Activated T-helper 1 cell treated with anti-CD3 and anti-CD28 coated beads, Interleukin-12 subunit alpha, Interleukin-12 subunit beta, Interleukin-2, Interleukin-4 antibody, amounts not matched to agents 30 ng/mL and 10 ng/mL and 1 ng/mL, durations not matched to agents 14 hours and 24 hours and 36 hours (primary cell): ENCODE measurements at regions of chr3 and their contacts with region 1.

Region 1: GRCh38 chr3:152524198-152525140 is 255.7 kb downstream of the MBNL1 start:
- DNase-seq: no peak
- H3K4me3 Mint-ChIP-seq: no peak overlapping the region
- H3K27ac Mint-ChIP-seq: no peak overlapping the region
- H3K4me1 Mint-ChIP-seq: no peaks in the 10 kb centered on the region
- H3K27me3 Mint-ChIP-seq: peaks cover 15% of the 10 kb centered on the region

Region 2: GRCh38 chr3:151468284-151468917 is 1056.1 kb before region 1 on chr3:
- intact Hi-C with region 1: loop called (anchors 2 kb)
- DNase-seq: peak; percentile 6
- H3K4me3 Mint-ChIP-seq: no peak overlapping the region
- H3K27ac Mint-ChIP-seq: no peak overlapping the region
- H3K4me1 Mint-ChIP-seq: no peaks in the 10 kb centered on the region
- H3K27me3 Mint-ChIP-seq: peaks cover 9% of the 10 kb centered on the region

Region 3: GRCh38 chr3:152071924-152072323 is 452.5 kb before region 1 on chr3:
- intact Hi-C with region 1: loop called (anchors 1 kb)
- DNase-seq: no peak
- H3K4me3 Mint-ChIP-seq: no peak overlapping the region
- H3K27ac Mint-ChIP-seq: no peak overlapping the region
- H3K4me1 Mint-ChIP-seq: no peaks in the 10 kb centered on the region
- H3K27me3 Mint-ChIP-seq: peaks cover 2% of the 10 kb centered on the region

Region 4: GRCh38 chr3:152508705-152509104 is 15.8 kb before region 1 on chr3:
- intact Hi-C with region 1: loop called (anchors 2 kb)
- DNase-seq: no peak
- H3K4me3 Mint-ChIP-seq: no peak overlapping the region
- H3K27ac Mint-ChIP-seq: no peak overlapping the region
- H3K4me1 Mint-ChIP-seq: peaks cover 24% of the 10 kb centered on the region
- H3K27me3 Mint-ChIP-seq: peaks cover 4% of the 10 kb centered on the region